Activated T-helper 2 cell treated with anti-CD3 and anti-CD28 coated beads, Interferon-gamma antibody, Interleukin-2, Interleukin-4, amounts not matched to agents 10 μg/mL and 5 μg/mL and 100 μg/mL, durations not matched to agents 14 hours and 24 hours and 36 hours (primary cell): ENCODE measurements at regions of chr6 and their contacts with region 1.

Region 1: GRCh38 chr6:127302728-127303660 is 36.3 kb downstream of the RNF146 start:
- DNase-seq: peak; percentile 16
- H3K4me3 Mint-ChIP-seq: no peak overlapping the region
- H3K27ac Mint-ChIP-seq: no peak overlapping the region
- H3K4me1 Mint-ChIP-seq: peaks cover 23% of the 10 kb centered on the region
- H3K27me3 Mint-ChIP-seq: no peaks in the 10 kb centered on the region

Region 2: DNA sequence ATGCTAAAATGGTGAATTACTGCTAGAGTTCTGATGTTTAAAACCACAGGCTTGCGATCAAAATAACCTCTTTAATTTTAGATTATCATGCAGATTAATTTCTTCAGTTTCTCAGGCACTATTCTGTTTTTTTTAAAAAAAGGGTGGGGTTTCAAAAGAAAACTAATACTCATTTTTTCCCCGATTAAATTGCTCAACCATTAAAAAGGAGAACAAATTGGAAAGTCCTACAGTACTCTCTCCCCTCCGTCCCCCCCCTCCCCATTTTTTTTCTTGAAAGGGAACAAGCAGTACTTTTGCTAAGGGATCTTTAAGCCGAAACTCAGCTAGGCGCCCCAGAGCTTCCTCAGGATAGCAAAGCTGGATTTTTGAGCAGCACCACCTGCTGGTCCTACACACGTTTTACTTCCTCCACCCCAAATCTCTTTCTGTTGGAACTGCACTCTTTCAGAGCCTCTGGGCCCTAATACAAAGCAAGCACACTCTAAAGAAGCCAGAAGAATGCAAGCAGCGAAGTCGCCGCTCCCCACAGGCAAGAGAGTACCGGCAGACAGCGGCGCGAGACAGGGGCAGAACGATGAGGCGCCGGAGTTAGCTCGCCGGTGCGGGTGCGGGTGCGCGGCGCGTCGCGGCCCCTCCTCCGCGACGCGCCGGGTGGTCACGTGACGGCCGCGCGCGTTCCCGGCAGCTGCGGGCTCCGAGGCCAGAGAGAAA is 36.7 kb before region 1 on chr6 and contains the start of gene RNF146:
- intact Hi-C with region 1: loop called (anchors 5 kb)
- DNase-seq: peak; percentile 69
- H3K4me3 Mint-ChIP-seq: peak within 1 kb of the TSS; percentile 97
- H3K27ac Mint-ChIP-seq: peak within 1 kb of the TSS; percentile 99
- H3K4me1 Mint-ChIP-seq: peaks cover 28% of the 10 kb centered on the region
- H3K27me3 Mint-ChIP-seq: peaks cover 16% of the 10 kb centered on the region
- total RNA-seq, gene RNF146: 18.7 and 19.1 TPM in 2 replicates

Region 3: GRCh38 chr6:127291495-127291894 is 11.5 kb before region 1 on chr6:
- intact Hi-C with region 1: loop called (anchors 1 kb)
- DNase-seq: no peak
- H3K4me3 Mint-ChIP-seq: no peak overlapping the region
- H3K27ac Mint-ChIP-seq: peak overlapping the region; percentile 48
- H3K4me1 Mint-ChIP-seq: peaks cover 40% of the 10 kb centered on the region
- H3K27me3 Mint-ChIP-seq: no peaks in the 10 kb centered on the region

Region 4: GRCh38 chr6:127342946-127343808 is 40.2 kb after region 1 on chr6 and contains the start of gene ECHDC1:
- intact Hi-C with region 1: loop called (anchors 5 kb)
- DNase-seq: peak; percentile 65
- H3K4me3 Mint-ChIP-seq: no peak within 1 kb of the TSS
- H3K27ac Mint-ChIP-seq: no peak within 1 kb of the TSS
- H3K4me1 Mint-ChIP-seq: peaks cover 19% of the 10 kb centered on the region
- H3K27me3 Mint-ChIP-seq: no peaks in the 10 kb centered on the region
- total RNA-seq, gene ECHDC1: 60.9 and 61.6 TPM in 2 replicates

Region 5: DNA sequence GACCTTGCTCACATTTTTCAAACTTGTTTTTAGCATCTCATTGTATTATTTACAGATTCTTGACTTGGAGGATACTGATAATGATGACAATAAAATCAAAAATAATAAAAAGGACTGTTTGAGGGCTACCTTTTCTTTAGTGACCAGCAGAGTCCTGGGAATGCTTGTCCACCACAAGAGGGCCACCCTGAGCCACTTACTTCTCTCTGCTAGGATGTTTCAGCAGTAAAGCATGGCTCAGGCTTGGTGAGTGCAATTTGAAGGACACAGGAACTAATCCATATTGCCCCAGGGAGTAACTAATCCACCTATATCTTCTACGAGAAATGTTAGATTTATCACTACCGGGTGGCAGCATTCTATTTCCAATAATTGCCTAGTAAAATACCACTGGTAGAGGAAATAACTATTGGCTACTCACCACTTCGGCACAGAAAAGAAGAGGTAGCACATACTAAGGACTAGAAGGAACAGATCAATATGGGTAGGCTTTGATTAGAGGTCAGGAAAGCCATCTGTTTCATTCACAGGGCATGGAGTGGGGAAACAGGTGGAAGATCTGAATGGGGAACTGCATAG is 162.0 kb after region 1 on chr6:
- intact Hi-C with region 1: loop called (anchors 2 kb)
- DNase-seq: peak; percentile 31
- H3K4me3 Mint-ChIP-seq: no peak overlapping the region
- H3K27ac Mint-ChIP-seq: no peak overlapping the region
- H3K4me1 Mint-ChIP-seq: peaks cover 25% of the 10 kb centered on the region
- H3K27me3 Mint-ChIP-seq: no peaks in the 10 kb centered on the region

Region 6: DNA sequence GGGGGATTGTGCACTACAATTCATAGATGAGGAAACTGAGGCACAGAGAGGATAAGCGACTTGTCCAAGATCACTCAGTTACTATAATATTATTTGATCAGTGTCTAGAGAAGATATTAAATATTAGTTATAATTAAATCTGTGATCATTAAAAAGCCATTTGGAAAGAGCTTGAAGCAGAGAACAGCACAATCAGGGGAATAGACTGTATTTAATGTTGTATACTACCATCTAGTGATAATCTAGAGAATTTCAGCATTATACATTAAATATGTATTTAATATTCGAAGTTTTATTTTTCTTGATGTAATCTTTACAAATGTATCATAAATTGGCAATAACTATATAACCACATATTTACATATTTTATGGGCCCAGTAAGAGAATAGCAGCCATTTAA is 236.3 kb after region 1 on chr6:
- intact Hi-C with region 1: loop called (anchors 1 kb)
- DNase-seq: no peak
- H3K4me3 Mint-ChIP-seq: no peak overlapping the region
- H3K27ac Mint-ChIP-seq: no peak overlapping the region
- H3K4me1 Mint-ChIP-seq: peaks cover 2% of the 10 kb centered on the region
- H3K27me3 Mint-ChIP-seq: peaks cover 22% of the 10 kb centered on the region